Caco-2 (cell line): ENCODE measurements at regions of chr10 and their contacts with region 1.

Region 1: DNA sequence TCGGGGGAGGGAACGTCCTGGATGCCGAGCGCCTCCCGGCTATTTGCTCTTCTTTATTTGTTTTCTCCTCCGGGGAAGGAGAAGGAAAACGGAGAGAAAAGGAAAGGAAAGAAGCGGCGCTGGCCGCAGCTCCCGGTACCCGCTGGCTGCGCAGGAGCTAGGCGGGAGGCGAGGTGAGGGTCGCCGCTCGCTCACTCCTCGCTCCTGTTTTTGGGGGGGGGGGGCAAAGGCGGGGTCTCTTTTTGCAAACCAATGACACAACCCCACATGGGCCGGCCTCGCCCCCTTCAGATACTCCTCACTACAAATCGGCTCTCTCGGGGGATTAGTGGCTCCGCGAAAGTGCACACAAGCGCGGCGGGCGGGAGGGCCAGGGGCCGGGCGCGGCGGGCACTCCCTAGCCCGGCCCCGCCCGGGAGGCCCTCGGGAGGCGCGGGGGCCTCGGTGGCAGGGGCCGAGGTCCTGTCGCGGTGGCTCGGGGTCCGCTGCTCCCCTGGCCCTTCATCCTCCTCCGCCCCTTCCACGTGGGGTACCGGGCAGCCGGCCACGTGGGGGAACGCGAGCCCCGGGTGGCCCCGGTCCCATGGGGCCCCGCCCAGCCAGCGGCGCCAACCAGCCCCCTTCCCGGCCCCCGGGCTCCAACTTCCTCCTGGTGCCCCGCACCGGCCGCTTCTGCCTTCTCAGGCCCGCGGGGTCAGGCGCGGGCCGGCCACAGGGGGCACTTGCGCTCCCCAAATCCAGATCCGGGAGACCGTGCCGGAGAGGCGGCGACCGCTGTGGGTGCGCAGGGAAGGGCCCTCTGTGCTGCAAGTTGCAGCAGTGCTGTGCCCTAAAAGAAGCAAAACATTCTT is 718 bp upstream of the CTBP2 start:
- DNase-seq: peak; percentile 92 to 94
- H3K4me3 ChIP-seq: peak overlapping the region; percentile 88
- H3K4me3 Mint-ChIP-seq: peak overlapping the region; percentile 86
- H3K27ac Mint-ChIP-seq: peak overlapping the region; percentile 94
- H3K4me1 ChIP-seq: peaks cover 10% of the 10 kb centered on the region
- H3K4me1 Mint-ChIP-seq: peaks cover 23% of the 10 kb centered on the region
- H3K27me3 ChIP-seq: no peaks in the 10 kb centered on the region
- H3K27me3 Mint-ChIP-seq: no peaks in the 10 kb centered on the region
- CTCF ChIP-seq: peak; percentile 50 to 75

Region 2: GRCh38 chr10:124898471-124898870 is 262.6 kb before region 1 on chr10:
- CTCF ChIA-PET with region 1: interaction called, 10 read pairs
- POLR2A ChIA-PET with region 1: no interaction called
- intact Hi-C with region 1: no loop called
- DNase-seq: peak; percentile 71 to 78
- H3K4me3 ChIP-seq: no peak overlapping the region
- H3K4me3 Mint-ChIP-seq: no peak overlapping the region
- H3K27ac Mint-ChIP-seq: no peak overlapping the region
- H3K4me1 ChIP-seq: peaks cover 9% of the 10 kb centered on the region
- H3K4me1 Mint-ChIP-seq: peaks cover 8% of the 10 kb centered on the region
- H3K27me3 ChIP-seq: no peaks in the 10 kb centered on the region
- H3K27me3 Mint-ChIP-seq: no peaks in the 10 kb centered on the region
- CTCF ChIP-seq: no peak

Region 3: GRCh38 chr10:125023862-125024489 is 137.1 kb before region 1 on chr10:
- CTCF ChIA-PET with region 1: no interaction called
- POLR2A ChIA-PET with region 1: no interaction called
- intact Hi-C with region 1: no loop called
- DNase-seq: no peak
- H3K4me3 ChIP-seq: no peak overlapping the region
- H3K4me3 Mint-ChIP-seq: peak overlapping the region; percentile 16
- H3K27ac Mint-ChIP-seq: no peak overlapping the region
- H3K4me1 ChIP-seq: no peaks in the 10 kb centered on the region
- H3K4me1 Mint-ChIP-seq: no peaks in the 10 kb centered on the region
- H3K27me3 ChIP-seq: no peaks in the 10 kb centered on the region
- H3K27me3 Mint-ChIP-seq: no peaks in the 10 kb centered on the region
- CTCF ChIP-seq: no peak

Region 4: DNA sequence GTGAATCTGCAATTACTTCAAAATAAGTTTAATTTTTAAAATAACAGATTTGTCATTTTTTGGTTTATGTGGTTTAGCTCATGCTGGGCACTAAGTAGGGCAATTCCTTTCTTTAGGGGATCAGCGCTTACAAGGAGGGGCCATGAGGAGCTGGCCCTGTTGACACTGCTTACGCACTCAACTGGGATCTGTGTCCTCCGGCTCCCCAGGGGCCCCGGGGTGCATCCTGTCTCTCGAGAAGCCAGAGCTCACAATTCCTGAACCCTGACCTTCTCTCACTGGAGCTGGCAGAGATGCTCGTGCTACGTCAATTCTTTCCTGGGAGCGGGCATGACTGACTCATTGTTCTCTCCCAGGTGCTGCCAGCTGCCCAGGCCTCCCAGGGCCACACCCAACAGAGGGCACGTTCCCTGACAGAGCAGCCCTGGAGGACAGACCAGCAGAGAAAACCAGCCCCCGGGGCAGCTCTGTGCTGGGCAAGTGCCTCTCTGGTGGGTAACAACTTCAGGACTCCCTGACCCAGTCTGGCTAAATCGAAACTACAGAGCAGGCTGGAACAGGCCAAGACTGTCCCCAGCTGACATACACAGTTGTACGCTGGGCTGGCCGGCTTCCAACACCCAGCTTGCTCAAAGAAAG is 37.5 kb before region 1 on chr10:
- CTCF ChIA-PET with region 1: no interaction called
- POLR2A ChIA-PET with region 1: no interaction called
- intact Hi-C with region 1: no loop called
- DNase-seq: no peak
- H3K4me3 ChIP-seq: no peak overlapping the region
- H3K4me3 Mint-ChIP-seq: no peak overlapping the region
- H3K27ac Mint-ChIP-seq: no peak overlapping the region
- H3K4me1 ChIP-seq: 0 out of 2 replicates have a peak, but pooled peaks cover 4% of the 10 kb centered on the region
- H3K4me1 Mint-ChIP-seq: peaks cover 6% of the 10 kb centered on the region
- H3K27me3 ChIP-seq: no peaks in the 10 kb centered on the region
- H3K27me3 Mint-ChIP-seq: no peaks in the 10 kb centered on the region
- CTCF ChIP-seq: no peak

Region 5: GRCh38 chr10:125193371-125193770 is 32.3 kb after region 1 on chr10:
- CTCF ChIA-PET with region 1: no interaction called
- POLR2A ChIA-PET with region 1: no interaction called
- intact Hi-C with region 1: no loop called
- DNase-seq: no peak
- H3K4me3 ChIP-seq: no peak overlapping the region
- H3K4me3 Mint-ChIP-seq: no peak overlapping the region
- H3K27ac Mint-ChIP-seq: no peak overlapping the region
- H3K4me1 ChIP-seq: no peaks in the 10 kb centered on the region
- H3K4me1 Mint-ChIP-seq: no peaks in the 10 kb centered on the region
- H3K27me3 ChIP-seq: no peaks in the 10 kb centered on the region
- H3K27me3 Mint-ChIP-seq: peaks cover 3% of the 10 kb centered on the region
- CTCF ChIP-seq: no peak

Region 6: DNA sequence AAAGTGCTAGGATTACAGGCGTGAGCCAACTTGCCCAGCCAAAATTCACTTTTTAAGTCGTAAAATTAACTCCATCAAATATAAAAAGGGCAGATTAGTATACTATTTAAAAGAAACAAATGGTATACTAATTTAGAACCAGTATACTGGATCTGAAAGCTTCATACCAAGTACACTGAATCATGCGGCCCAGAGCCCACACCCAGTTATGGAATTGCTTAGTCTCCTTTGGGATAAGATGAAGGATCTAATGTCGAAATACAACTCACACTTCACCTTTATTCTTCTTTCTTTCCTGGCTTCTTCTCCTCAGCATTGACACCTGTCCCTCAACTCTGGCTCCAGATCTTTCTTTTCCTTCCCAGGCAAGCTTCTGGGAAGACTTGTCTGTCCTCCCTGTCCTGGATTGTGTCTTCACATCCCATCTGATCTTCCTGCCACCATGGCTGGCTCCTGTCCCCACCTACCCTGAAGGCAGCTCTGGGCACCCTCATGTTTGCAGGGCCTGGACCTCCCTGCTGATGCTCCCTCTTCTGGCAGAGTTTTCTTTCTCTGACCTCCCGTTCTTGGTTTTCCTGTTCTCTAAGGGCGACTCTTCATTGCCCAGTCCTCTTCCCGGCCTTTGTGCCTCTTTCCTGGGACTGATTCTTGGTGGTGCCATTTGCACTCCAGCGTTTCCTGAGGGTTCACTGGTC is 57.1 kb after region 1 on chr10:
- CTCF ChIA-PET with region 1: no interaction called
- POLR2A ChIA-PET with region 1: no interaction called
- intact Hi-C with region 1: loop called (anchors 5 kb)
- DNase-seq: no peak
- H3K4me3 ChIP-seq: no peak overlapping the region
- H3K4me3 Mint-ChIP-seq: no peak overlapping the region
- H3K27ac Mint-ChIP-seq: no peak overlapping the region
- H3K4me1 ChIP-seq: peaks cover 11% of the 10 kb centered on the region; the same call in 1 of the 2 replicates
- H3K4me1 Mint-ChIP-seq: peaks cover 16% of the 10 kb centered on the region
- H3K27me3 ChIP-seq: no peaks in the 10 kb centered on the region
- H3K27me3 Mint-ChIP-seq: no peaks in the 10 kb centered on the region
- CTCF ChIP-seq: no peak

Region 7: DNA sequence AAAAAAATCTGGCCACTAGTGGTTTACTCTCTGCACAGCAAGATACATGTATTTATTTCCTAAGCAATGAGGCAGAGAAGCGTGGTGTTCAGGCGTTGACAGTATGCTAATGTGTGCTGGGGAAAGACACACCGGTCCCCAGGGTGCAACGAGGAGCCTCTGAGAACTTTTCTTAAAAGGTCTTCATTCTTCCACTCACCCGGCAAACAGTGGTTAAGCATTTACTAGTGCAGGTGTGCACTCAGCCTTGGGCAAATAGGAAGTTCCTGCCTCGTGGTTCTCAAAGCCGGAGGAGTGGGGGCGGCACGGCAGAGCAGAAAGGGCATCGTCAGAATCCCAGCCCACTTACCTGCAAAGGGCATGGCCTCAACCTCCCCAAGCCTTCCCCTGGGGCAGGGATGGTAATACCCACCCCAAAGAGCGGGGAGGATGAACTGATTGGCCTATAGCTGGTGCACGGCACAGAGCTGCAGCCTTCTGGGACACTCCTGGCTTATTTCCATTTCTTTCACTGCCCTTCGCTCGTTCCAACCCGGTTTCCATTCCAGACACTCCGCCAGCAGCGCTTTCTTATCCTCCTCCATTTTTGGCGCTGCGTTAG is 183.6 kb after region 1 on chr10:
- CTCF ChIA-PET with region 1: no interaction called
- POLR2A ChIA-PET with region 1: no interaction called
- intact Hi-C with region 1: loop called (anchors 1 kb)
- DNase-seq: peak; percentile 67 to 71
- H3K4me3 ChIP-seq: peak overlapping the region; percentile 43
- H3K4me3 Mint-ChIP-seq: peak overlapping the region; percentile 75
- H3K27ac Mint-ChIP-seq: peak overlapping the region; percentile 70
- H3K4me1 ChIP-seq: no peaks in the 10 kb centered on the region; the same call in none of the 2 replicates
- H3K4me1 Mint-ChIP-seq: peaks cover 8% of the 10 kb centered on the region
- H3K27me3 ChIP-seq: no peaks in the 10 kb centered on the region
- H3K27me3 Mint-ChIP-seq: no peaks in the 10 kb centered on the region
- CTCF ChIP-seq: no peak

Region 8: GRCh38 chr10:125707541-125708468 is 546.7 kb after region 1 on chr10:
- CTCF ChIA-PET with region 1: no interaction called
- POLR2A ChIA-PET with region 1: no interaction called
- intact Hi-C with region 1: loop called (anchors 10 kb)
- DNase-seq: peak in 1 of 2 experiments; percentile 16
- H3K4me3 ChIP-seq: no peak overlapping the region
- H3K4me3 Mint-ChIP-seq: no peak overlapping the region
- H3K27ac Mint-ChIP-seq: no peak overlapping the region
- H3K4me1 ChIP-seq: peaks cover 17% of the 10 kb centered on the region
- H3K4me1 Mint-ChIP-seq: peaks cover 17% of the 10 kb centered on the region
- H3K27me3 ChIP-seq: no peaks in the 10 kb centered on the region
- H3K27me3 Mint-ChIP-seq: no peaks in the 10 kb centered on the region
- CTCF ChIP-seq: no peak